Right ventricle myocardium inferior (tissue), 1 donor: ENCODE measurements at regions of chr1 and their contacts with region 1.

Region 1: GRCh38 chr1:8671306-8671917 is 146.0 kb downstream of the RERE start:
- DNase-seq: no peak
- ATAC-seq: peak; percentile 67

Region 2: GRCh38 chr1:8560611-8561544 is 110.5 kb before region 1 on chr1:
- intact Hi-C with region 1: loop called (anchors 1 kb)
- DNase-seq: no peak
- ATAC-seq: peak; percentile 60